Activated T-helper 2 cell treated with anti-CD3 and anti-CD28 coated beads, Interferon-gamma antibody, Interleukin-2, Interleukin-4, amounts not matched to agents 10 μg/mL and 5 μg/mL and 100 μg/mL, durations not matched to agents 14 hours and 24 hours and 36 hours (primary cell): ENCODE measurements at regions of chr5 and their contacts with region 1.

Region 1: GRCh38 chr5:32413466-32414263 is 30.9 kb downstream of the ZFR start:
- DNase-seq: no peak
- H3K4me3 Mint-ChIP-seq: no peak overlapping the region
- H3K27ac Mint-ChIP-seq: peak overlapping the region; percentile 5
- H3K4me1 Mint-ChIP-seq: peaks cover 7% of the 10 kb centered on the region
- H3K27me3 Mint-ChIP-seq: no peaks in the 10 kb centered on the region

Region 2: GRCh38 chr5:32369542-32370155 is 44.0 kb before region 1 on chr5:
- intact Hi-C with region 1: loop called (anchors 5 kb)
- DNase-seq: no peak
- H3K4me3 Mint-ChIP-seq: no peak overlapping the region
- H3K27ac Mint-ChIP-seq: peak overlapping the region; percentile 60
- H3K4me1 Mint-ChIP-seq: peaks cover 4% of the 10 kb centered on the region
- H3K27me3 Mint-ChIP-seq: no peaks in the 10 kb centered on the region

Region 3: DNA sequence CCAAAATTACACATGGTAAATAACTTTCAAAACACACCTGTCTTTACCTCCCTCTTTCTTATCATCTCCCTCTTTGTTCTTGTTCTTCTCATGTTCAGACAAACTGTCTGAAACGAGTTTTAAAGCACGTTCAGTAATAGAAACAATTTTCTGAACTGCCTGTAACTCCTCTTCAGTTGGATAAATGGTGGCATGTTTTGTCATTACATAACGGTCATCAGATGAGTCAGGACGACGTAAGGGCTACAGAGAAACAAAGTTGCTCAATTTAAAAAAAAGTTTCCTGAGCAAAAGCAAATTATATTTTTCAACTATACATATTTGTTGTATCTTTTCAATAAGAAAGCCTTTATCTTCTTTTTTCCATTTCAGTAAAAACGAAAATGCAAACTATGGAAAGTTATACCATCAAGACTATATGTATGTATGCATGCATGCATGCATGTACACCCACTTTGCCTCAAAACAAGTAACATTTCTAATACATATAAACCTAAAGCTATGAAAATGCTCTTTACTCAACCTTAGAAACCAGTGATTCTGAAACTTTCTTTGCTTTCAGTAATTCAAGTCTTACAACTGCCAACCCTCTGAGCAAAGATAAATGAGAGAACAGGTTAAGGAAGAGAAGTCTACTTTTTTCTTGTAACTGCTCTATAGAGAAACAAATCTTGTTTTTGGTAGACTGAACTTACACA is 25.1 kb before region 1 on chr5:
- intact Hi-C with region 1: no loop called
- DNase-seq: no peak
- H3K4me3 Mint-ChIP-seq: no peak overlapping the region
- H3K27ac Mint-ChIP-seq: peak overlapping the region; percentile 82
- H3K4me1 Mint-ChIP-seq: peaks cover 22% of the 10 kb centered on the region
- H3K27me3 Mint-ChIP-seq: no peaks in the 10 kb centered on the region